Activated CD4-positive, alpha-beta T cell treated with anti-CD3 and anti-CD28 coated beads for 36 hours (primary cell): ENCODE measurements at regions of chr11 and their contacts with region 1.

Region 1: GRCh38 chr11:63938479-63939396 is at the start of gene NAA40:
- DNase-seq: peak; percentile 97
- ATAC-seq: peak; percentile 93
- H3K4me3 Mint-ChIP-seq: peak within 1 kb of the TSS; percentile 83
- H3K27ac Mint-ChIP-seq: peak within 1 kb of the TSS; percentile 87
- H3K4me1 Mint-ChIP-seq: peaks cover 16% of the 10 kb centered on the region
- H3K27me3 Mint-ChIP-seq: no peaks in the 10 kb centered on the region
- total RNA-seq, gene NAA40: 13.7 to 15.9 TPM

Region 2: DNA sequence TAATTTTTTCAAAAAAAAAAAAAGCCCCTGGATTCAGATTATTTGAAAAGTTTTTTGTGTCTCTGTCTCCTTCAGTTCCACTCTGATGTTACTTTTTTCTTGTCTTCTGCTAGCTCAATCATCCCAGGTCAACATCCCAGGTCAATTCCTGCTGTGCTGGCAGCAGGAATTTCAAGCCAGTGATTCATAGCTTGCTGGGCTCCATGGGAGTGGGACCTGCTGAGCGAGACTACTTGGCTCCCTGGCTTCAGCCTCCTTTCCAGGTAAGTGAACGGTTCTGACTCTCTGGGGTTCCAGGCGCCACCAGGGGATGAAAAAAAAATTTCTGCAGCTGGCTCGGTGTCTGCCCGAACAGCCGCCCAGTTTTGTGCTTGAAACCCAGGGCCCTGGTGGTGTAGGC is 479.2 kb before region 1 on chr11:
- CTCF ChIA-PET with region 1: no interaction called
- POLR2A ChIA-PET with region 1: no interaction called
- intact Hi-C with region 1: no loop called
- DNase-seq: no peak
- ATAC-seq: no peak
- H3K4me3 Mint-ChIP-seq: no peak overlapping the region
- H3K27ac Mint-ChIP-seq: no peak overlapping the region
- H3K4me1 Mint-ChIP-seq: no peaks in the 10 kb centered on the region
- H3K27me3 Mint-ChIP-seq: peaks cover 4% of the 10 kb centered on the region

Region 3: GRCh38 chr11:63813035-63813562 is 125.6 kb before region 1 on chr11 and contains the start of gene SPINDOC:
- CTCF ChIA-PET with region 1: no interaction called
- POLR2A ChIA-PET with region 1: no interaction called
- intact Hi-C with region 1: loop called in 1 of 2 experiments (anchors 1 kb)
- DNase-seq: peak; percentile 80
- ATAC-seq: peak; percentile 91
- H3K4me3 Mint-ChIP-seq: peak within 1 kb of the TSS; percentile 77
- H3K27ac Mint-ChIP-seq: no peak within 1 kb of the TSS
- H3K4me1 Mint-ChIP-seq: peaks cover 21% of the 10 kb centered on the region
- H3K27me3 Mint-ChIP-seq: no peaks in the 10 kb centered on the region
- total RNA-seq, gene SPINDOC: 25.7 to 26.2 TPM

Region 4: DNA sequence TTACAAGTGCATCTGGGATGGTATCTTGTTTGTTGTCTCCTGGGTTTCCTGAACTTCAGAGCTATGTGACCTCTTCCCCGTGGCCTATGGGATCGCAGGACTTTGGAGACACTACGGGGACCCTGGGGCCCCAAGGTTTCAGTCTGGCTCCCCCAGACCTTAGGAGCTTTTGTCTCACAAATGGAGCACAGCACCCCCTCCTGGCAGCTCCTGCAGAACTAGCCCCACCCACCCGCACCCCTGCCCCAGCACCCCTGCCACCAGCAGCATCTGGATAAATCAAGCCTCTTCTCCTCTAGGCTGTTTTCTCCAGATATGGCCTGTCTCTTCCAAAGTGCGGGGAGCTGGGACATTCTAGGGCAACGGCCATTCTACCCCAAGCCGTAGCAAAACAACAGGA is 32.2 kb before region 1 on chr11:
- CTCF ChIA-PET with region 1: no interaction called
- POLR2A ChIA-PET with region 1: no interaction called
- intact Hi-C with region 1: loop called in 1 of 2 experiments (anchors 1 kb)
- DNase-seq: peak; percentile 79
- ATAC-seq: peak; percentile 70
- H3K4me3 Mint-ChIP-seq: no peak overlapping the region
- H3K27ac Mint-ChIP-seq: no peak overlapping the region
- H3K4me1 Mint-ChIP-seq: no peaks in the 10 kb centered on the region
- H3K27me3 Mint-ChIP-seq: no peaks in the 10 kb centered on the region

Region 5: GRCh38 chr11:63986156-63986931 is 47.6 kb after region 1 on chr11 and contains the start of gene OTUB1:
- CTCF ChIA-PET with region 1: no interaction called
- POLR2A ChIA-PET with region 1: no interaction called
- intact Hi-C with region 1: loop called in 1 of 2 experiments (anchors 1 kb)
- DNase-seq: peak; percentile 94
- ATAC-seq: peak; percentile 92
- H3K4me3 Mint-ChIP-seq: peak within 1 kb of the TSS; percentile 93
- H3K27ac Mint-ChIP-seq: peak within 1 kb of the TSS; percentile 89
- H3K4me1 Mint-ChIP-seq: peaks cover 23% of the 10 kb centered on the region
- H3K27me3 Mint-ChIP-seq: no peaks in the 10 kb centered on the region
- total RNA-seq, gene OTUB1: 77.4 to 86.1 TPM

Region 6: DNA sequence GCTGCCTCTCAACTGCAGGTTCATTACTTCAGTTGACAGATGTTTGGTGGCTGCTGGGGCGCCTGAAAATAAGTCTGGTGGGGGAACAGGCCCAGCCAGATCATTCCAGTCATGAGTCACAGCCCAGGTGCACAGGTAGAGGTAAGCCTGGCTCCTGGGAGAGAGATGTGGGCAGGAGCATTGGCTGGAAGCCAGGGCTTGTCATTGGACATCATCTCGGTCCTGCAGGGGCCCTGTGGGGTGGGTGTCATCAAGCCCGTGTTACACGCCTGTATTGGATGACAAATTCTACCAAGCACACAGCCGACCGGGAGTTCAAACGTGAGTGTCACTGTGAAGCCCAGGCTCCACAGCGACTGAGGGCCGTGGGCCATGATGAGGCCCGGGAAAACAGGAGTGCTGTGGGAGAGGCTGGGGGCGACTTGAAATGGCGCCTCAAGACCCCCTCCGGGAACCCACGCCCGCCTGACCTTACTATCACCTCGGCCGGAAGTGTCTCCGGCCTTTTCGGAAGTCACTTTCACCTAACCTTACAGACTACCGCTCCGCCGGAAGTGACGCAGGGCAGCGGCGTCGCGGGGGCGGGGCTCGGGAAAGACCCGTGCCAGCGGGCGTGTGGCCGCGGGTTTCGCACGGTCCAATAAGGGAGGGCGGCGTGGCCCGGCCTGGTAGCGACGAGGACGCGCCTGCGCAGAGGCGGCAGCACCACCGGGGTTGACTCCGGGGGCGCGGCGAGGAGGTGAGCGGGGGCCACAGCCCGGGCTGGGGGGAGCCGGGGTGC is 301.8 kb after region 1 on chr11 and contains the start of gene FKBP2:
- CTCF ChIA-PET with region 1: no interaction called
- POLR2A ChIA-PET with region 1: no interaction called
- intact Hi-C with region 1: loop called in 1 of 2 experiments (anchors 2 kb)
- DNase-seq: peak; percentile 99
- ATAC-seq: peak; percentile 68
- H3K4me3 Mint-ChIP-seq: peak within 1 kb of the TSS; percentile 86
- H3K27ac Mint-ChIP-seq: peak within 1 kb of the TSS; percentile 99
- H3K4me1 Mint-ChIP-seq: peaks cover 31% of the 10 kb centered on the region
- H3K27me3 Mint-ChIP-seq: no peaks in the 10 kb centered on the region
- total RNA-seq, gene FKBP2: 19.9 to 21.3 TPM